Activated CD8-positive, alpha-beta memory T cell treated with anti-CD3 and anti-CD28 coated beads, Interleukin-2, amount 10 ng/mL, durations not matched to agents 7 days and 5 days (primary cell): ENCODE measurements at regions of chr14 and their contacts with region 1.

Region 1: GRCh38 chr14:92951912-92952471 is 29.0 kb downstream of the CHGA start:
- DNase-seq: peak; percentile 86
- ATAC-seq: peak; percentile 95
- H3K4me3 Mint-ChIP-seq: no peak overlapping the region
- H3K27ac Mint-ChIP-seq: peak overlapping the region; percentile 60
- H3K4me1 Mint-ChIP-seq: peaks cover 7% of the 10 kb centered on the region
- H3K27me3 Mint-ChIP-seq: no peaks in the 10 kb centered on the region

Region 2: GRCh38 chr14:93132470-93133065 is 180.6 kb after region 1 on chr14:
- CTCF ChIA-PET with region 1: interaction called, 29 read pairs
- DNase-seq: peak; percentile 50
- ATAC-seq: peak; percentile 57
- H3K4me3 Mint-ChIP-seq: no peak overlapping the region
- H3K27ac Mint-ChIP-seq: no peak overlapping the region
- H3K4me1 Mint-ChIP-seq: no peaks in the 10 kb centered on the region
- H3K27me3 Mint-ChIP-seq: peaks cover 12% of the 10 kb centered on the region

Region 3: DNA sequence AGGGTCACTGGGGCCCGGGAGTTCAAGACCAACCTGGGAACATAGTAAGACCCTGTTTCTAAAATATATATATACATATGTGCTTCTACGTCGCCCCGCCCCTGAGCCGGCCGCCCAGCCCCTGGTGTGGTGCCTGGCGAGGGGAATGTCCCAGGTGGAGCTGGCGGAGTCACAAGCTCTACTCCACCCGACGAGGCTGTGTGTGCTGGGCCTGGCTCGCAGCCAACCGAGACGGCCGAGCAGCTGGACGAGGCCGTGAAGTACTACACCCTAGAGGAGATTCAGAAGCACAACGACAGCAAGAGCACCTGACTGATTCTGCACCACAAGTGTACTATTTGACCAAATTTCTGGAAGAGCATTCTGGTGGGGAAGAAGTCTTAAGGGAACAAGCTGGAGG is 185.9 kb after region 1 on chr14:
- CTCF ChIA-PET with region 1: interaction called, 29 read pairs
- DNase-seq: no peak
- ATAC-seq: no peak
- H3K4me3 Mint-ChIP-seq: no peak overlapping the region
- H3K27ac Mint-ChIP-seq: no peak overlapping the region
- H3K4me1 Mint-ChIP-seq: peaks cover 5% of the 10 kb centered on the region
- H3K27me3 Mint-ChIP-seq: no peaks in the 10 kb centered on the region